CD8-positive, alpha-beta T cell (primary cell): ENCODE measurements at regions of chrX and their contacts with region 1.

Region 1: DNA sequence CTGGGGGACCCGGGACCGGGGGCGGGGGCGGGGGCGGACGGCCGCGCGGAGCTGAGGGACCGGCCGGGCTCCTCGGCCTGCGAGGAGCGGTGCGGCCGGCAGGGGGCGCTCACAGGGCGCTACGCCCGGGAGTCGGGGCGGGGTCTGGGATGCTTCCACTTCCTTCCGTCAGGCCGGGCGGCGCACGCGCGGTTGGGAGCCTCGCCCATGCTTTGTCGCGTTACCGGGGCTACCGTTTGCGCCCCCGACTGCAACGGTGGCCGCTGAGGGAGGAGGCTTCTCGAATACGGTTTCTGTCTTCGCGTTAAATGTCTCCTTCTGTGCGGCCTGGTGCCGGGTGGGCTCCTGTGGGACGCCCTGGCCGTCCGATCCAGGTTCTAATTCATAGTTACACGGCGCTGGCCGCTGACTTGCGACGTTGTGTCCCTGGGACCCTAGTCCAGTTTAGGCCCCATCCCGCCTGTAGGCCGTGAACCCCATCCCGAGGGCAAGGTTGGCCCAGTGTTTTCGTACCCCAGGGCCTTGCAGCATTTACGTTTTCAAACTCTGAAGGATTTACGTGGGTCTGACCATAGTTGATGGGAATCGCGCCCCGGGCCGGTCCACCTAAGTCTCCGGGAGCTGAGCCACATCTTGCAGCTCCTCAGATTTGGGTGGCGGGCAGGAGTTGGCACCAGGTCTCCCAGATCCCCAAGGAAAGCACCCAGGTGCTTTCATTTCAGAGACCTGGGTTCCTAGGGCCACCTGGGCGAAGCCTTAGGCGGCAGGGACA is 549 bp downstream of the MSL3 start:
- DNase-seq: peak; percentile 76 to 93 (median 89)
- ATAC-seq: peak; percentile 61
- H3K4me3 ChIP-seq: peak overlapping the region; percentile 76 to 91
- H3K4me3 Mint-ChIP-seq: peak overlapping the region; percentile 88
- H3K27ac ChIP-seq: peak overlapping the region; percentile 87 to 93
- H3K27ac Mint-ChIP-seq: peak overlapping the region; percentile 97
- H3K4me1 ChIP-seq: peaks cover 18% of the 10 kb centered on the region
- H3K4me1 Mint-ChIP-seq: peaks cover 34% of the 10 kb centered on the region
- H3K27me3 ChIP-seq: no peaks in the 10 kb centered on the region
- H3K27me3 Mint-ChIP-seq: no peaks in the 10 kb centered on the region
- CTCF ChIP-seq: peak; percentile 62

Region 2: GRCh38 chrX:11111038-11111851 is 647.3 kb before region 1 on chrX and contains the start of gene HCCS:
- CTCF ChIA-PET with region 1: no interaction called
- POLR2A ChIA-PET with region 1: no interaction called
- intact Hi-C with region 1: loop called in 1 of 2 experiments (anchors 10 kb)
- DNase-seq: peak; percentile 67 to 91 (median 84)
- ATAC-seq: peak; percentile 85
- H3K4me3 ChIP-seq: peak within 1 kb of the TSS; percentile 72 to 86
- H3K4me3 Mint-ChIP-seq: peak within 1 kb of the TSS; percentile 95
- H3K27ac ChIP-seq: peak within 1 kb of the TSS; percentile 82 to 95
- H3K27ac Mint-ChIP-seq: peak within 1 kb of the TSS; percentile 99
- H3K4me1 ChIP-seq: peaks cover 15% of the 10 kb centered on the region
- H3K4me1 Mint-ChIP-seq: peaks cover 30% of the 10 kb centered on the region
- H3K27me3 ChIP-seq: no peaks in the 10 kb centered on the region
- H3K27me3 Mint-ChIP-seq: no peaks in the 10 kb centered on the region
- CTCF ChIP-seq: no peak
- total RNA-seq, gene HCCS: 8.3 to 9.1 TPM

Region 3: GRCh38 chrX:12791257-12792228 is 1033.0 kb after region 1 on chrX and contains the start of gene PRPS2:
- CTCF ChIA-PET with region 1: no interaction called
- POLR2A ChIA-PET with region 1: no interaction called
- intact Hi-C with region 1: loop called in 1 of 2 experiments (anchors 5 kb)
- DNase-seq: peak; percentile 43 to 80 (median 71)
- ATAC-seq: peak; percentile 93
- H3K4me3 ChIP-seq: peak within 1 kb of the TSS; percentile 69 to 74
- H3K4me3 Mint-ChIP-seq: peak within 1 kb of the TSS; percentile 90
- H3K27ac ChIP-seq: peak within 1 kb of the TSS; percentile 39 to 52
- H3K27ac Mint-ChIP-seq: peak within 1 kb of the TSS; percentile 81
- H3K4me1 ChIP-seq: peaks cover 9% of the 10 kb centered on the region
- H3K4me1 Mint-ChIP-seq: peaks cover 26% of the 10 kb centered on the region
- H3K27me3 ChIP-seq: no peaks in the 10 kb centered on the region
- H3K27me3 Mint-ChIP-seq: no peaks in the 10 kb centered on the region
- CTCF ChIP-seq: no peak
- total RNA-seq, gene PRPS2: 10.5 to 13.4 TPM